Dorsolateral prefrontal cortex (tissue), 120 donors: ENCODE measurements at regions of chr1 and their contacts with region 1.

Region 1: GRCh38 chr1:11377001-11377583 is 101.9 kb upstream of the DISP3 start:
- DNase-seq: peak in 1 of 10 donors; percentile 68
- H3K4me3 ChIP-seq: no peak overlapping the region
- H3K27ac ChIP-seq: no peak overlapping the region
- H3K27me3 ChIP-seq: peaks cover 0 to 10% (median 0%) of the 10 kb centered on the region in 45 donors
- CTCF ChIP-seq: no peak

Region 2: DNA sequence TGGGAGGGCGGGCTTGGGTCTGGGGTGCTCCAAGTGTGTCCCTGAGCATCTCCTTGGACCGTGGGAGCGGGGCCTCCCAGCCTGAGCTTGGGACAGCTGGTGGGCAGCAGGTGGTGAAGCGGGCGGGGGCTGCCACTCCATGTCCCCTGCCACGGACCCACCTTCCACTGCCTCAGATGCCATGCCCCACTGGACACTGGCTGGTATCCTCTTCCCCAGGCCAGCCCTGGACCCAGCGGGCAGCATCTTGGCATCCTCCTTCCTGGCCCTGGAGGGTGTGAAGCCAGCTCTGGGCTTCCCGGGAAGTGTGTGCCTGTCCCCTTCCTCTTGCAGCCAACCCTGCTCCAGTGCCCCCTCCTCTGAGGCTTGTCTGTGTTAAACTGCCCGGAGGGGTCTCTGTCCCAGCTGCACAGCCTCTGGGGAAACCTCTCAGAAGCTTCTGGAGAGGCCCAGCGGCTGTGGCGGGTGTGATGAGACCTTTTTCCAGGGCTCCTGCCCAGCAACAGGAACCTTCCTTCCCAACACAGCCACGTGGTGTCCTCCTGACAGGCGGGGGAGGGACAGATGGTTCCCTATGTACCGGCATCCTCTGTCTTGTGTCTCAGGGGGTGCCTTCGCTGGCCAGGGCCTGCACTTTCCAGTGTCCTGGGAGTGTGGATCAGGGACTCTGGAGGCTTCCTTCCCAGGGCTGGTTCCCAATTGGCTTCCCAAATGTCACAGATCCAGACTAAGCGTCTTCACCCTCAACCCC is 20.2 kb after region 1 on chr1:
- intact Hi-C with region 1: no loop called
- DNase-seq: peak in 1 of 10 donors; percentile 65
- H3K4me3 ChIP-seq: no peak overlapping the region
- H3K27ac ChIP-seq: no peak overlapping the region
- H3K27me3 ChIP-seq: peaks cover 0 to 10% (median 0%) of the 10 kb centered on the region in 45 donors
- CTCF ChIP-seq: no peak

Region 3: GRCh38 chr1:11448375-11449099 is 71.4 kb after region 1 on chr1:
- intact Hi-C with region 1: loop called in 1 of 2 experiments (anchors 5 kb)
- DNase-seq: peak in 1 of 10 donors; percentile 27
- H3K4me3 ChIP-seq: no peak overlapping the region
- H3K27ac ChIP-seq: peak overlapping the region in 4 of 59 donors; percentile 25 to 70 (median 46)
- H3K27me3 ChIP-seq: peaks cover 0 to 17% (median 0%) of the 10 kb centered on the region in 45 donors
- CTCF ChIP-seq: no peak